ENCODE measurements at regions of chr10 and their contacts with region 1.

Region 1: GRCh38 chr10:86755740-86756510 is 494 bp upstream of the BMPR1A start:
- DNase-seq: peak; percentile 59
- ATAC-seq: peak; percentile 92
- H3K4me3 ChIP-seq: peak overlapping the region; percentile 79 to 81
- H3K27ac ChIP-seq: peak overlapping the region; percentile 98
- H3K4me1 ChIP-seq: peaks cover 19 to 27% of the 10 kb centered on the region in 2 experiments
- H3K27me3 ChIP-seq: no peaks in the 10 kb centered on the region
- CTCF ChIP-seq: no peak
- POLR2A ChIP-seq: peak; percentile 74
- RAD21 ChIP-seq: no peak

Region 2: GRCh38 chr10:86254526-86255174 is 501.3 kb before region 1 on chr10:
- CTCF ChIA-PET with region 1: no interaction called
- POLR2A ChIA-PET with region 1: no interaction called
- RAD21 ChIA-PET with region 1: no interaction called
- intact Hi-C with region 1: no loop called
- DNase-seq: peak; percentile 70
- ATAC-seq: peak; percentile 93
- H3K4me3 ChIP-seq: 0 out of 4 replicates have a peak overlapping the region, but pooled peaks of 1 of the 2 experiments have one; percentile 5
- H3K27ac ChIP-seq: no peak overlapping the region
- H3K4me1 ChIP-seq: peaks cover 20 to 25% of the 10 kb centered on the region in 2 experiments
- H3K27me3 ChIP-seq: no peaks in the 10 kb centered on the region
- CTCF ChIP-seq: no peak
- POLR2A ChIP-seq: no peak
- RAD21 ChIP-seq: no peak; the same call in 1 of the 2 replicates

Region 3: GRCh38 chr10:86521678-86522509 is 234.0 kb before region 1 on chr10 and contains the start of gene WAPL:
- CTCF ChIA-PET with region 1: no interaction called
- POLR2A ChIA-PET with region 1: no interaction called
- RAD21 ChIA-PET with region 1: no interaction called
- intact Hi-C with region 1: loop called (anchors 5 kb)
- DNase-seq: peak; percentile 81
- ATAC-seq: peak; percentile 93
- H3K4me3 ChIP-seq: peak within 1 kb of the TSS; percentile 82 to 84
- H3K27ac ChIP-seq: peak within 1 kb of the TSS; percentile 85
- H3K4me1 ChIP-seq: peaks cover 12 to 22% of the 10 kb centered on the region in 2 experiments; a peak in 3 of 4 replicates
- H3K27me3 ChIP-seq: no peaks in the 10 kb centered on the region
- CTCF ChIP-seq: no peak
- POLR2A ChIP-seq: peak; percentile 39
- RAD21 ChIP-seq: no peak
- total RNA-seq, gene WAPL: 37.5 TPM

Region 4: DNA sequence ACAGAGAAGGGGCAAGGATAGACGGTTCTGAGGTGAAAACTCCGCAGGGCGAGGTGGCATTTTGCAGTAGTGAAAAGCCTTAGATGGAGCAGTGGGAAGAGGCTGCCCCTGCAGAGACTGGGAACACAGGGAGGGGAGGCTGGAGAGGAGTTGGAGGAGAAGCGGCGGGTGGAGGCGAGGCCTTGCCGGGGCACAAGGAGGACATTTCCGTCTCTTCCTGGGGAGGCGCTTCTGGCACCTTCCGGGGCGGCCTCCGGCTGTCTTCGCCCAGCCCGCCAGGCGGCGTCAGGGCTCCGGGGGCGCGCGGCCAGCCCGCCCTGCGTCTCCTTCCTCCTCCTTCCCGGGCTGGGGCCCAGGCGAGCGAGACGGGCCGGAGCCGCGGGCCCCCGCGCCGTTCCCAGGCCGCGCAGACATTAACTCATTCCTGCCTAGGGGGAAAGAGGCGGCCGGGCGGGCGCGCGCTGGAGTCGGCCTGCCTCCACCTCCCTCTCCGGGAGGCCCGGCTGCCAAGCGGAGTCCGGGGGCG is 44.9 kb before region 1 on chr10:
- CTCF ChIA-PET with region 1: interaction called, 3 read pairs
- POLR2A ChIA-PET with region 1: no interaction called
- RAD21 ChIA-PET with region 1: no interaction called
- intact Hi-C with region 1: loop called (anchors 1 kb)
- DNase-seq: peak; percentile 54
- ATAC-seq: peak; percentile 90
- H3K4me3 ChIP-seq: peak overlapping the region; percentile 63 to 87
- H3K27ac ChIP-seq: peak overlapping the region; percentile 98
- H3K4me1 ChIP-seq: peaks cover 8 to 19% of the 10 kb centered on the region in 2 experiments; a peak in 3 of 4 replicates
- H3K27me3 ChIP-seq: no peaks in the 10 kb centered on the region
- CTCF ChIP-seq: peak; percentile 63 to 77 (median 67)
- POLR2A ChIP-seq: no peak
- RAD21 ChIP-seq: peak; percentile 73